ENCODE measurements at regions of chr1 and their contacts with region 1.

Region 1: GRCh38 chr1:160681067-160681890 is 30.3 kb downstream of the CD48 start:
- DNase-seq: peak; percentile 94
- H3K4me3 Mint-ChIP-seq: peak overlapping the region; percentile 17
- H3K27ac Mint-ChIP-seq: peak overlapping the region; percentile 96
- H3K4me1 Mint-ChIP-seq: peaks cover 87% of the 10 kb centered on the region
- H3K27me3 Mint-ChIP-seq: no peaks in the 10 kb centered on the region

Region 2: GRCh38 chr1:160558660-160559380 is 122.5 kb before region 1 on chr1:
- CTCF ChIA-PET with region 1: no interaction called
- POLR2A ChIA-PET with region 1: no interaction called
- intact Hi-C with region 1: no loop called
- DNase-seq: no peak
- H3K4me3 Mint-ChIP-seq: peak overlapping the region; percentile 71
- H3K27ac Mint-ChIP-seq: peak overlapping the region; percentile 91
- H3K4me1 Mint-ChIP-seq: peaks cover 71% of the 10 kb centered on the region
- H3K27me3 Mint-ChIP-seq: no peaks in the 10 kb centered on the region

Region 3: DNA sequence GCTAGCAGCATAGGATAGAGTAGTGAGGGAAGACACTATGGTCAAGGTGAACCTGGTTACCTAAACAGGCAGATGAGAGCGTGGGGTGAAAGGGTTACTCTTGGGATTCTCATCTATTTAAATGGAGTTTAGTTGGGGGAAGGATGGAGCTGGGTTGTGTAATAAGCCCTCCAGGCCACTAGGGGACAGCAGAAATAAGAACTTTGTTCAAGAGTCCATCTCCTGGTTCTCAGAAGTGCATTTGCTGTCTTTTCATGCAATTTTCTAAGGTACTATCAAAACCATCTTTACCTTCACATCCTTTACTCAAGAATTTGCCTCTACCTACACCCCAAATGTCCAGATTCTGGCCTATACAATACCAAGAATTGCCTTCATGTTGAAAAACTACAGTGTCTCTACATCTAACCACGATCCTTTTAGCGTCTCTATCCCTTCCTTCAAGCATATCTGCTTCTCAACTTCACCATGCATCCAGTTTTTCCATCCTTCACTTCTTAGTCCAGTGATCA is 62.5 kb before region 1 on chr1:
- CTCF ChIA-PET with region 1: interaction called, 69 read pairs
- POLR2A ChIA-PET with region 1: interaction called, 3 read pairs
- intact Hi-C with region 1: no loop called
- DNase-seq: peak; percentile 59
- H3K4me3 Mint-ChIP-seq: no peak overlapping the region
- H3K27ac Mint-ChIP-seq: peak overlapping the region; percentile 68
- H3K4me1 Mint-ChIP-seq: peaks cover 63% of the 10 kb centered on the region
- H3K27me3 Mint-ChIP-seq: no peaks in the 10 kb centered on the region

Region 4: GRCh38 chr1:160646711-160647328 is 34.5 kb before region 1 on chr1 and contains the start of gene SLAMF1:
- CTCF ChIA-PET with region 1: interaction called, 58 read pairs
- POLR2A ChIA-PET with region 1: interaction called, 81 read pairs
- intact Hi-C with region 1: no loop called
- DNase-seq: peak; percentile 85
- H3K4me3 Mint-ChIP-seq: peak within 1 kb of the TSS; percentile 96
- H3K27ac Mint-ChIP-seq: peak within 1 kb of the TSS; percentile 98
- H3K4me1 Mint-ChIP-seq: peaks cover 47% of the 10 kb centered on the region
- H3K27me3 Mint-ChIP-seq: no peaks in the 10 kb centered on the region
- total RNA-seq, gene SLAMF1: 166 TPM

Region 5: DNA sequence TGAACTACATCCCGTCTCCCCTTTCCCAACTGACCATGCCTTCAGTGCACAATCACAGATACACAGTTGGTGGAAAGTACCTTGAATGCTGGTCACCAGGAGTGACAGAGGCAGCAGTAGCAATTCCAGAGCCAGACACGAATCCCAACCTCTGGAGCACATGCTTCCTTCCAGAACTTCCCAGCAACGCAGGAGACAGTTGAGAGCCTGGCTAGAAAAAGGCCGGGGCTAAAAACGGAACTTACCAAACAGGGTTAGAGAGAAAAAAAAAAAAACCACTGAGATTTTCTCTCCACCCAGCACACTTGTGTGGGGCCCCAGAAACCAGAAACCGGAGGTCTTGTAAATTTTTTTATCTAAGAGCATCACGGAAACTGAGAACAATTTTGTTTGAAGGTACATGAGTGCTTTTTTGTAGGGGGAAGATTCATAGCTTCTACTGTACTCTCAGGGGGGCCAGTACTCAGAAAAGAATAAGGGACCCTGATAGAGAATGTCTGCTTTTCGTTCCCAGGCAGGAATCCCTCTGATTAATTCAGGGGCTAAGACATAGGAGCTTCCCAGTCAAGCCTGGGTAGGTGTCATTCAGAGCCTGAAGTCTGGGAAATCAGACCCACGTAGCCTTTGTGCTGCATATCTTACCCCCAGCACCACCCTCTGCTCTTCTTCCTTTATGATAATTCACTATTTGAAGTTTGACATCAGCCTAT is 30.5 kb after region 1 on chr1 and contains the start of gene CD48:
- CTCF ChIA-PET with region 1: interaction called, 51 read pairs
- POLR2A ChIA-PET with region 1: interaction called, 14 read pairs
- intact Hi-C with region 1: loop called (anchors 1 kb)
- DNase-seq: peak; percentile 65
- H3K4me3 Mint-ChIP-seq: no peak within 1 kb of the TSS
- H3K27ac Mint-ChIP-seq: no peak within 1 kb of the TSS
- H3K4me1 Mint-ChIP-seq: peaks cover 17% of the 10 kb centered on the region
- H3K27me3 Mint-ChIP-seq: no peaks in the 10 kb centered on the region
- total RNA-seq, gene CD48: 190 to 194 TPM

Region 6: GRCh38 chr1:160777486-160778089 is 96.3 kb after region 1 on chr1:
- CTCF ChIA-PET with region 1: interaction called, 30 read pairs
- POLR2A ChIA-PET with region 1: no interaction called
- intact Hi-C with region 1: no loop called
- DNase-seq: peak; percentile 58
- H3K4me3 Mint-ChIP-seq: no peak overlapping the region
- H3K27ac Mint-ChIP-seq: no peak overlapping the region
- H3K4me1 Mint-ChIP-seq: peaks cover 38% of the 10 kb centered on the region
- H3K27me3 Mint-ChIP-seq: no peaks in the 10 kb centered on the region

Region 7: DNA sequence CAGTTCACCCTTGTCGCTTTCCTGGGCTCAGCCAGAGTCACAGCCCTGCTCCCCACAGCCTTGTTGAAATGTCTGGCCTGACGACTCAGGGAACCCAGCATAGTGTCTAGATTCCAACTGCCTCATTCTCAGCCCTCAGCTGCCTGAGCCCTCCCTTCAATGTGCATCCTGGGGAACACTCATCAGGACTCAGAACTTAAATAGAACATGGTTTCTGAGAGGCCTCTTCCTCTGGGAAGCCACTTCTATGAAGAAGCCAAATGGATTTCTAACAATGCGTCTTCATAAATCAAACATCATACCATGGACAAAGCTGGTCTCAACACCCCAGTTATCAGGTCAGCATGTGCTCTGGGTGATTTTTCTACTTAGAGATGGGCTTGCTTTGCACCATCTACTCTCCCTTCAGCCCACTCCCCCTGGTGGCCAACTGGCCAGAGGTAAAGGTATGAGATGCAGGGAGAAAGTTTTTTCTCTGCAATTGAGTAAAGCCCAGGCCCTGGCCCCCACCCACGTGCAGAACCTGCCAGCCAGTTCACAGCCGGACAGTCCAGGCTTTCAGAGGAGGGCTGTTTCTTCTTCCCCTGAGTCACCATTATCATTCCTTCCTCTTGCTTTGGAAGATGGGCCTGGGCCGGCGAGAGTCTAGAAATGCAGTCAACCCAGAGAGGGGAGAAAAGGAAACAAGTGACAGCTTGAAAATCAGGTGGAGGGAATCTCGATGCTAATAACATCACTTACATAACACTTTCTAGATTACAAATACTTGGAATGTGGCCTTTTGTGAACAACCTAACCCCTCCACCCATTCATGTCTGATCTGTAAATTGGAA is 149.3 kb after region 1 on chr1:
- CTCF ChIA-PET with region 1: interaction called, 20 read pairs
- POLR2A ChIA-PET with region 1: no interaction called
- intact Hi-C with region 1: loop called (anchors 2 kb)
- DNase-seq: peak; percentile 86
- H3K4me3 Mint-ChIP-seq: no peak overlapping the region
- H3K27ac Mint-ChIP-seq: no peak overlapping the region
- H3K4me1 Mint-ChIP-seq: peaks cover 12% of the 10 kb centered on the region
- H3K27me3 Mint-ChIP-seq: no peaks in the 10 kb centered on the region